ENCODE measurements at regions of chr19 and their contacts with region 1.

Region 1: GRCh38 chr19:45506246-45506990 is 861 bp upstream of the VASP start:
- DNase-seq: peak; percentile 99
- H3K4me3 Mint-ChIP-seq: peak overlapping the region; percentile 86
- H3K27ac Mint-ChIP-seq: peak overlapping the region; percentile 94
- H3K4me1 Mint-ChIP-seq: peaks cover 39% of the 10 kb centered on the region
- H3K27me3 Mint-ChIP-seq: no peaks in the 10 kb centered on the region

Region 2: DNA sequence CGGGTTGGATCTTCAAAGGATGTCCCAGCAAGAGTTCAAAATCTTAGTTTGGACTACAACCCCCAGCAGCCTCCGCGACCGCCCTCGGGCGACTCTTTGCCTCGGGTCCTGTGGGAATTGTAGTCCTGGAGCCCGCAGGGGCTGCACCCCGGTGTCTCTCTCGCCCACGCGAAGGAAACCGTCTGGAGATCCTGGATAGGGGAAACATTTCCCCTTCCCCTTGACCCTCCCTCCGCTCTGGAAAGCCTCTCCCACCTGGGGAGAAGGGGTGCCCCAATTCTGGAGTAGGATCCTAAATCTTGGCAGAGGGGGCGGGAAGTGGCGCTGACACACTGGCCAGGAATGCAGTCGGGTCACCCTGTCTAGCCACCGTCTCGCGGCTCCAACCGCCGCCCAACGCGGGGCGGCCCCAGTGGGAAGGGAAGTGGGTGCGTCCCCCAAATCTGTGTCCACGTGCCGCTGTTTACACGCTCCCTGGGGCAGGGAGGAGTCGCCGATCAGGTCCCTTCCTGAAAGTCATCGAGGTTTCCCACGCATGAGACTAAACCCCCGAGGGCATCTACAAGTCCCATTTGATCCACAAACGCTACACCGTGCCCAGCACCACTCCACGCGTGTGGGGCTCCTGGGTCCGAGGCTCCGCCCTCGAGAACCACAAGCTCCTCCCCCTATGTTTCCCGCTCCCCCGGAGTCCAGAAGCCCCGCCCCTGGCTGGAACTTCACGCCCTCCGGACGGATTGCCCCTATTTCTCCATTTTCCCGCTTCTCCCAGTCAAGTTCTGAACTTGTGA is 100.8 kb before region 1 on chr19:
- CTCF ChIA-PET with region 1: no interaction called
- intact Hi-C with region 1: loop called (anchors 1 kb)
- DNase-seq: peak; percentile 90
- H3K4me3 Mint-ChIP-seq: peak overlapping the region; percentile 93
- H3K27ac Mint-ChIP-seq: peak overlapping the region; percentile 93
- H3K4me1 Mint-ChIP-seq: peaks cover 44% of the 10 kb centered on the region
- H3K27me3 Mint-ChIP-seq: peaks cover 30% of the 10 kb centered on the region

Region 3: DNA sequence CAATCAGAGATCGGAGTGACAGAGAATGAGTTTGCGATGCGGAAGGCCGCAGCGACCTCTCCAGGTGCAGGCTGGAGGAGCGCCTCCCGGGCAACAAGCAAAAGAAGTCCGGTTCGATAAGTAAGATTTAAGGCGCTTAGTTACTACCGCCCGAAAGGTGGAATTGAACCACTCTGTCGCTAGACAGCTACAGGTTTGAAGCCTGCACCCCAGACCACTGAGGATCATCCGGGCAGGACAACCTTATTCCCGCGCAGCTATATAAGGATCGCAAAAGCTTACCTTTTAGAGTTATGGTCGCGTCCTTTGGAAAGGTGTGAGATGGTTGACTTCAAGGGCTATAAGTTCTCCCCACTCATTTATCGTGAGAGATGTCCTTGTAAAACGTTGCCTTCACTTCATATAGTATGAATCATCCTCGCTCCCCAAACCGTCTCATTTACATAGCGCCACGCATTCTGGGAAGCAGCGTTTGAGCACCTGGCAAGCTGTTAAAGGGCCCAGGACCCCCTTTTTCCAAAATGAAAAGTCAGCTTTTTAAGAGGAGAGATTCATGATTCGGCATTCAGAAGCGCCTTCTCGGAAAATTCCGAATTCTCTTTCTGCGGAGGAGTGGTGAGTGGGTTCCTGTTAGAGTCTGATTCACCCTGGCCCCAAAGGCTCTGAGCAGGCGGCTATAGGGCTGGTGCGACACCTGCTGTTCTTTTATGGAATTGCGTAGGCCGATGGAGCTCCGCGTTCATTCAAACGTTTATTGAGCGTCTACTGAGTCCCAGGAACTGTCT is 27.8 kb before region 1 on chr19:
- CTCF ChIA-PET with region 1: interaction called, 4 read pairs
- intact Hi-C with region 1: loop called (anchors 2 kb)
- DNase-seq: peak; percentile 96
- H3K4me3 Mint-ChIP-seq: peak overlapping the region; percentile 54
- H3K27ac Mint-ChIP-seq: peak overlapping the region; percentile 95
- H3K4me1 Mint-ChIP-seq: peaks cover 22% of the 10 kb centered on the region
- H3K27me3 Mint-ChIP-seq: peaks cover 2% of the 10 kb centered on the region

Region 4: DNA sequence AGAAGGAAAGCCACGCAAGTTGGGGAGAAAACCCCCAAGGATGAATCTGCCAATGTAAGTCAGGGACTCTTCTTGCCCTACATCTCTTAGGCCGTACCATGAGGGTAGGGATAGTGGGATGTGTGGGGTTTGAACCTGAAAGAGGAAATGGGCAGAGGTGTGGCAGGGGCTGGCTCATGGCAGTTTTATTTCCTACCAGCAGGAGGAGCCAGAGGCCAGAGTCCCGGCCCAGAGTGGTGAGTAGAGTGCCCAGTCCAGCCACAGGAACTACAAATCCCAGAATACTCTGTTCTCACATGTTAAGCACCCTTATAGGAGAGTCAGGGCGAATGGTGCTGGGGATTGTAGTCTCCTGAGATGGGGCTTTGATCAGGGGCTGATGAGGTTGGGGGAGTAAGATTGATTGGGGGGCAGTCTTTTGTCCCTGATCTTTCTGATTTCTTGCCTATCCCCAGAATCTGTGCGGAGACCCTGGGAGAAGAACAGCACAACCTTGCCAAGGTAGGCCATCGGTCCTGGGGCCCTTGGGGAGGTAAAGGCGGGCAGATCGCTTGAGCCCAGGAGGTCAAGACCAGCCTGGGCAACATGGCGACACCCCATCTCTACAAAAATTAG is 17.3 kb after region 1 on chr19:
- CTCF ChIA-PET with region 1: no interaction called
- intact Hi-C with region 1: loop called (anchors 1 kb)
- DNase-seq: peak; percentile 82
- H3K4me3 Mint-ChIP-seq: no peak overlapping the region
- H3K27ac Mint-ChIP-seq: peak overlapping the region; percentile 55
- H3K4me1 Mint-ChIP-seq: peaks cover 18% of the 10 kb centered on the region
- H3K27me3 Mint-ChIP-seq: no peaks in the 10 kb centered on the region

Region 5: DNA sequence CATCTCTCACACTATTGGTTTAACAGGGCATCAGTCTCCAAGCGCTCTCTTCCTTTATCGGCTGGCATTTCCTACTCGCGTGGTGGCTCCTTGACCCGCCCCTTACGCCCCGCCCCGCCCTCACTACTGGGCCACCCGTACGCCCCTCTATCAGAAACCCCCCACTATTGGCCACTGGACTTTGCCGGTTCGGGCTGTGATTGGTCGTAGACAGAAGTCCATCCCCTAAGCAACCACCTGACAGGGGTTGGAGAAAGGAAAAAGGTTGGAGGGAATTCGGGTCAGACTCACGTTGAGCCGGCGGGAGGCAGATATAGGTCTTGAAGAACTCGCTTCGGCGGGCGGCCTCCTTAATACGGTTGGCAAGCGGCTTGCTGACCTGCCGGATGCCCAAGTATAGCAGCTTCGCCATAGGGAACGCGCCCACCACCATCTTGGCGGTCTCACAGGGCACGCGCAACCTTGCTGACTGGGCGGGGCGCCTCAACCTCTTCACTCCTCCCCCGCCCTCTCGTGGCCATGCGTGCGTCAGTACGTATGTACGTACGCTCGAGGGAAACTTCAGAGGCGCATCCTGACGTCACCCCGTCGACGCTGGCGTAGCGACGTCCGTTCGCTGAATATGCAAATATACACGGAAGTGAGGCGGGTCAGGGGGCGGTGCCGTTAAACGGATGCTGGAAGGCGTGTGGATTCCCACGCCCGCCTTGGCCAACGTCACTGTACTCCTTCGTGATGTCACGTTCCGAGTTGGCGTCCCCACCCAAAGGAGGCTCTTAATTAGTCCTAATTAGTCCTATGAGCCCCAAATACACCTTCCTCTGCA is 78.1 kb after region 1 on chr19 and contains the start of gene OPA3:
- CTCF ChIA-PET with region 1: no interaction called
- intact Hi-C with region 1: loop called (anchors 1 kb)
- DNase-seq: peak; percentile 100
- H3K4me3 Mint-ChIP-seq: peak within 1 kb of the TSS; percentile 89
- H3K27ac Mint-ChIP-seq: peak within 1 kb of the TSS; percentile 98
- H3K4me1 Mint-ChIP-seq: peaks cover 14% of the 10 kb centered on the region
- H3K27me3 Mint-ChIP-seq: peaks cover 3% of the 10 kb centered on the region
- total RNA-seq, gene OPA3: 12.4 to 12.7 TPM

Region 6: DNA sequence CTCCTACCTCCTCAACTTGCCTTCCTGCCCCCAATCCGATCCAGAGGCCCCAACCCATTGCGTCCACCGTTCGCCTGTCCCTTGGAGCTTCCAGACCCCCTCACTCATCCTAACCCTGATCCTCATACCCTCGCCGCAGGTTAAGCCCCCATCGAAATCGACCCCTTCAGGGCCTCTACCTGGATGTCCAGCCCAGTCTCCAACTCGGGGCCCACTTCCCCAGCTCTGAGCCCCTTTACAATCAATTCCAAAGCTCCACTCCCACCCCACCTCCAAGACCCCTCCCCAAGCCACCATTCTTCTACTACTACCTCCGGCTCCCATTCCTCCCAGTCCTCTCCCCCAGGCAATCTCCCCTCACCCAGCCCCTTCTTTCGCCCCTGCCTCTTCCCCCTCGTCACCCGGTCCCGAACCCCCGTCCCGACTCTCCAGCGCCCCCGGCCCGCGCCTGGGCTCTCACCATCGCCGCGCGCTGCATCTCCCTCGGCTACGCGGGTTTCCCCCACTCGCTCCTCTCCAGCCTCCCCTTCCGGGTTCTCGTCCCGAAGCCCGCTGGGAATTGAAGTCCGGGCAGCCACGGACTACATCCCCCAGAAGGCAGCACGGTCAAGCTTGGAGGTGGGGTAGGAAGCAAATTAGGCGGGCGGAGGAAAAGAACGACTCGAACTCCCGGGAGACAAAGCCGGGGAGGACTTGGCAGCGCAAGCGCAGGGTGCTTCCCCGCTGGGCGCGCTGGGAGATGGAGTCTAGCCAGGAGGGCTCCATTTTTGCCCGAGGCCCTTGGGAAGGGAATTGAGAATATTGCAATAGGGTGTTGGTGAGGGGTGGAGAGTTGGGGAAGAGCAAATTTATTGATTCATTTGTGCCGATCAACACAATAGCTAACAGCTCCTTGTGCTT is 224.2 kb after region 1 on chr19 and contains the start of gene FBXO46:
- CTCF ChIA-PET with region 1: no interaction called
- intact Hi-C with region 1: loop called (anchors 1 kb)
- DNase-seq: peak; percentile 99
- H3K4me3 Mint-ChIP-seq: peak within 1 kb of the TSS; percentile 95
- H3K27ac Mint-ChIP-seq: peak within 1 kb of the TSS; percentile 83
- H3K4me1 Mint-ChIP-seq: peaks cover 29% of the 10 kb centered on the region
- H3K27me3 Mint-ChIP-seq: no peaks in the 10 kb centered on the region
- total RNA-seq, gene FBXO46: 21.8 to 23.2 TPM

Measured in activated naive CD4-positive, alpha-beta T cell treated with anti-CD3 and anti-CD28 coated beads for 36 hours (primary cell).